ENCODE measurements at regions of chr15 and their contacts with region 1.

Region 1: DNA sequence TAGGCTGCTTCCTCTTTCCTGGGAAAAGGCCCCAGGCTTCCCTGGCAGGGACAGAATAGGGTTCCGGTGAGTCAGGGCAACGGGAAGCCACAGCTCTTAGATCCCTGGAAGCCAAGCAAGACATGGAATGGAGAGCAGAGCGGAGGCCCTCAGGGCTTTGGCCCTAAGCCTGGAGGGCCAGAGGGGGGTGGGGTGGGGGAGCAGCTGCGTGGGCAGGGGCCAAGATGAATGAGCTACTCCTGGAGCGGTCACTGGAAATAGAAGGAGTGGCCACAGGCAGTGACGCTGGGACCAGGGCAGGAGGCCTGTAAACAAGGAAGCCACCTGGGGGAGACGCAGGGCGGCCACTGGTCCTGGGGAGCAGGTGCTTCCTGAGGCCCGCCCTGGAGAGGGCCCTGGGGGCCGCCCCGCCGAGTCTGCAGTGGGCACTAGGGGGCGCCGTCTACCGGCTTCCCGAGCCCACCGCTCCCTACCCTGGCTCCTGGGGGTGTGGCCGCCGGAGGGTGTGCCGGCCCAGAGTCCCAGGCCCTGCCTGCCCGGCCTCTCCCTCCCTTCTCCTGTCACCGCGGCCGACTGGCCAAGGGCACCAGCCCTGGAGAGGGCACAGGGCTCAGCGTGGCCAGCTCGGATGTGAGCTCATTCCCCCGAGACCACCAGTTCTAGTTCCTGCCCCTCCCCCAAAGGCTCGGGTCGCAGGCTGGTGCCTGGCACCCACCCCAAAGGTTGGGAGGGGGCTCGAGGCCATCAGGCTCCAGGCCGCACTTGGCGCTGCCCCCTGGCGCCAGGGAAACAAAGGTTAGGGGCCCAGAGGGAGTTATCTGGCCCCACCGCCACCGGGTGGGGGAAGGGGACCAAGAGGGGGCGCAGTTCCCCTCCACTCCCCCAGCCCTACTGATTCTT is 12.1 kb downstream of the VPS18 start:
- DNase-seq: peak; percentile 65
- H3K4me3 ChIP-seq: peak overlapping the region; percentile 41
- CTCF ChIP-seq: peak; percentile 87

Region 2: GRCh38 chr15:40600956-40601355 is 305.4 kb before region 1 on chr15:
- CTCF ChIA-PET with region 1: no interaction called
- POLR2A ChIA-PET with region 1: no interaction called
- DNase-seq: no peak
- H3K4me3 ChIP-seq: no peak overlapping the region
- CTCF ChIP-seq: no peak

Region 3: DNA sequence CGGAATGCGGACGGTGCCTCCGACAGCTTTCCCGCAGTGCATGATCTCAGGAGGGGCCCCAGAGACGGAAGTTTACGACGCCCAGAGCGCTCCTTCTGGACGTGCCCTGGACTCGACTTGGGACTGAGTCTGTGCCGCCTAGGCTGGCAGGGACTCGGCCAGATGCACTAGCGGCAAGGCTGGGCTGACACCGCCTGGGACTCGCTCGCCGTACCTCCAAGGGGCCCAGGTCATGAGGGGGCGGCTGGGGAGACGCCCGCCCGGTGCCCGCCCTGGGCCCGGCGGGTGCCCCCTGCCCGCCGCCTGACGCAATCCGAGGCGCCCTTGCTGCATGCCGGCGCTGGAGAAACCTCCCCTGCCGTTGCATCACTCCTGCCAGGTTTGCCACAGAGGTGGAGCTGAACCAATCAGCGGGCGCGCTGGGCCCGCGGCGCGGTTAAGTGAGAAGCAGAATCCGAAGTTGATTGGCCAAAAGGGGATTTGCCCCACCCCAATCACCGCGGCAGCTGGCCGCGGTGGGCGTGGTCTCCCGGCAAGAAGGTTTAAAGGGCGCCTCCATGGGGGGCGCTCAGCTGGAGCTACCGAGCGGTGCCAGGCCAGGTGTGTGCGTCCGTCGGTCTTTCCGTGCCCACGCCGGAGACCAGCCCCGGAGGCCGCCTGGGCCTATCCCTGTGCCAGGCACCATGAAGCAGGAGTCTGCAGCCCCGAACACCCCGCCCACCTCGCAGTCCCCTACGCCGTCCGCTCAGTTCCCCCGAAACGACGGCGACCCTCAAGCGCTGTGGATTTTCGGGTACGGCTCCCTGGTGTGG is 46.8 kb after region 1 on chr15 and contains the start of gene CHAC1:
- CTCF ChIA-PET with region 1: interaction called, 11 read pairs
- POLR2A ChIA-PET with region 1: interaction called, 8 read pairs
- DNase-seq: peak; percentile 86
- H3K4me3 ChIP-seq: peak within 1 kb of the TSS; percentile 96
- CTCF ChIP-seq: no peak

Region 4: DNA sequence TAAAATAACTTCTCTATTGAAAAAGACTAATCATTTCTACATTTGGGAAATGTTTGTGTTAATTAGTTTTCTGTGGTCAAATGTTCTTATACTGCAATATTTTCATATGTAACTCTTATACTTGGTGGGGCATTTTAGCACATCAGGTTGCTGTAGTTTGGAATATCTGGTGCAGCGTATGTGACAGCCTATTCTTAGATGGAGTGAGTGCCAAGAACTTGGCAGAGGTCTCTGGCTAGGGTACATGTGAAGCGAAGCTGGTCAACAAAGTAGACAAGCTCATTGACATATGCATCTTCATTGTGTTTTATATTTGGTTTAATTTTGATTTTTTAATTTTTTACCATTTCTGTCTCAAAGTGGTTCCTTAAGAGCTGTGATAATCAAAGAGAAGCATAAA is 100.1 kb after region 1 on chr15:
- CTCF ChIA-PET with region 1: interaction called, 11 read pairs
- POLR2A ChIA-PET with region 1: no interaction called
- DNase-seq: no peak
- H3K4me3 ChIP-seq: no peak overlapping the region
- CTCF ChIP-seq: no peak

Region 5: GRCh38 chr15:41031232-41032078 is 125.1 kb after region 1 on chr15:
- CTCF ChIA-PET with region 1: interaction called, 498 read pairs
- POLR2A ChIA-PET with region 1: no interaction called
- DNase-seq: no peak
- H3K4me3 ChIP-seq: no peak overlapping the region
- CTCF ChIP-seq: no peak

Measured in AG04449 (cell line).